CD4-positive, alpha-beta T cell (primary cell): ENCODE measurements at regions of chr9 and their contacts with region 1.

Region 1: GRCh38 chr9:129365196-129365595 is 187.1 kb upstream of the IER5L start:
- DNase-seq: no peak
- ATAC-seq: no peak
- H3K4me3 ChIP-seq: no peak overlapping the region
- H3K4me3 Mint-ChIP-seq: no peak overlapping the region
- H3K27ac ChIP-seq: no peak overlapping the region
- H3K27ac Mint-ChIP-seq: no peak overlapping the region
- H3K4me1 ChIP-seq: no peaks in the 10 kb centered on the region
- H3K4me1 Mint-ChIP-seq: no peaks in the 10 kb centered on the region
- H3K27me3 ChIP-seq: no peaks in the 10 kb centered on the region
- H3K27me3 Mint-ChIP-seq: no peaks in the 10 kb centered on the region
- CTCF ChIP-seq: no peak

Region 2: GRCh38 chr9:129284373-129285291 is 80.6 kb before region 1 on chr9:
- CTCF ChIA-PET with region 1: no interaction called
- POLR2A ChIA-PET with region 1: no interaction called
- intact Hi-C with region 1: loop called in 1 of 2 experiments (anchors 5 kb)
- DNase-seq: peak in 1 of 14 experiments; percentile 5
- ATAC-seq: no peak
- H3K4me3 ChIP-seq: no peak overlapping the region
- H3K4me3 Mint-ChIP-seq: no peak overlapping the region
- H3K27ac ChIP-seq: no peak overlapping the region
- H3K27ac Mint-ChIP-seq: no peak overlapping the region
- H3K4me1 ChIP-seq: no peaks in the 10 kb centered on the region
- H3K4me1 Mint-ChIP-seq: no peaks in the 10 kb centered on the region
- H3K27me3 ChIP-seq: no peaks in the 10 kb centered on the region
- H3K27me3 Mint-ChIP-seq: no peaks in the 10 kb centered on the region
- CTCF ChIP-seq: no peak

Region 3: DNA sequence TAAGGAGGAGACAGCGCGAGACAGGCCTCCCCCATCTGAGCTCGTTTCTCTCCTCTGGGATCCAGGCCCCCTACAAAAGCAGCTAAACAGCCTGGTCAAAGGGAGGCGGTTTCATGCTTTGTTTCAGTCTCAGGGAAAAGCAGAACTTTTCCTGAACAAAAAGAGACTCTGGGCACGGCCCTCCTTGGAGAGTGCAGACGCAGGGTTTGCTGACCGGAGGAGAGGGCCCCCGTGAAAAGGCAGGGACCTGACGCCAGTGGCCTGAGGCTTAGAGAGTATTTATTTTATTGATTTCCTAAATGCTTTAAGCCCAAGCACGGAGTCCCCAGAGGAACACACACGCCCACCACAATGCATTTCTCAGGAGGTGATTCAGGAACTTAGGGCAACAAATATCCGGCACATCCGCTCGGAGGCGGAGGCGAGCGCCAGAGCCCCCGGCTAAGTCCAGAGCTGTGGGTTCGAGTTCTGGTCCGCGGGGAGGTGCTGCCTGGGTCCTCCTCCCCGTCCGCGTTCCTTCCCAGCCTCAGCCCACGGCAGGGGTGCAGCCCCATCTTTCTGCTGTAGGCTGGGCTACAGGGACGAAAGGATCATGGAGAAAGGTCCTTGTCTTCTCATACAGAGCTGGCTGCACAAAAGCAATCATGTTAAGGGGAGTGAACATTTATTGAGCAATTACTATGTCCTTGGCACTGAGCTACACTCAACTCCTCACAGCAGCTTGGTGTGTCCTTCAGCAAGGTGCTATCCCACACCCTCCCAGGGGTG is 347.6 kb after region 1 on chr9:
- CTCF ChIA-PET with region 1: no interaction called
- POLR2A ChIA-PET with region 1: no interaction called
- intact Hi-C with region 1: no loop called
- DNase-seq: peak in 1 of 14 experiments; percentile 13
- ATAC-seq: no peak
- H3K4me3 ChIP-seq: no peak overlapping the region
- H3K4me3 Mint-ChIP-seq: no peak overlapping the region
- H3K27ac ChIP-seq: no peak overlapping the region
- H3K27ac Mint-ChIP-seq: no peak overlapping the region
- H3K4me1 ChIP-seq: peaks cover 30% of the 10 kb centered on the region
- H3K4me1 Mint-ChIP-seq: peaks cover 22% of the 10 kb centered on the region
- H3K27me3 ChIP-seq: no peaks in the 10 kb centered on the region
- H3K27me3 Mint-ChIP-seq: peaks cover 11% of the 10 kb centered on the region
- CTCF ChIP-seq: no peak